ENCODE measurements at regions of chr14 and their contacts with region 1.

Region 1: GRCh38 chr14:69460093-69460701 is 24.3 kb upstream of the PLEKHD1 start:
- DNase-seq: no peak
- H3K4me3 ChIP-seq: no peak overlapping the region
- H3K27ac ChIP-seq: no peak overlapping the region
- H3K4me1 ChIP-seq: no peaks in the 10 kb centered on the region
- H3K27me3 ChIP-seq: no peaks in the 10 kb centered on the region
- CTCF ChIP-seq: peak; percentile 72 to 83 (median 75)
- EP300 ChIP-seq: no peak
- POLR2A ChIP-seq: no peak

Region 2: DNA sequence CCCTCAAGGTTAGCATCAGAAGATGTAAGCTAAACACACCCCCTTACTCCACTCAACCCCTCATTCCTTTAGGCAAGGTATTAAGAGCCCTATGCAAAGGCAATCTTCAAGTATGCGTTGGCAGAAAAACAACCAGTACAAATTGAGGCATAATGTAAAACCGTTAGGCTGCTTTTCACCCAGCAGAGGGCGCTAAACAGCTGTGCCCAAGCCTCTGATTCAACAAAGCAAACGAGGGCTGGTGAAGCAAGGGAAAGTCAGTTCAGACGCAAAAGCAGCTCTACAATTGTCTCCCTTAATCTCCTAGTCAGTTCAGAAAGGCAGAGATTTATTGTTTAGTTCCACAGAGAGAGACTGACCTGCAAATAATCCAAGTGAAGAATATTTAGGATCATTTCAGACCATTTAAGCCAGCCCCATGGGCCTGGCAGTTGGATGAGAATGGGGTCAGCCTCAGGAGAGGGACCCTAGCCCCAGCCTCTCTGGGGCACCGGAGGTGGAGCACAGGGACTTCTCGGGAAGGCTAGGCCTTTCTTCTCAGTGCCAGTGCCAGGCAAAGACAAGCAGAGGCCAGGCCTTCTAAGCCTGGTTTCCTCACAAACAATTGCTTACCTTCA is 330.8 kb before region 1 on chr14:
- intact Hi-C with region 1: loop called (anchors 10 kb)
- DNase-seq: no peak
- H3K4me3 ChIP-seq: no peak overlapping the region
- H3K27ac ChIP-seq: peak overlapping the region; percentile 70 to 73 (median 72)
- H3K4me1 ChIP-seq: peaks cover 39 to 80% (median 63%) of the 10 kb centered on the region in 4 donors
- H3K27me3 ChIP-seq: no peaks in the 10 kb centered on the region
- CTCF ChIP-seq: peak in 2 of 3 experiments; percentile 92
- EP300 ChIP-seq: no peak
- POLR2A ChIP-seq: no peak

Region 3: DNA sequence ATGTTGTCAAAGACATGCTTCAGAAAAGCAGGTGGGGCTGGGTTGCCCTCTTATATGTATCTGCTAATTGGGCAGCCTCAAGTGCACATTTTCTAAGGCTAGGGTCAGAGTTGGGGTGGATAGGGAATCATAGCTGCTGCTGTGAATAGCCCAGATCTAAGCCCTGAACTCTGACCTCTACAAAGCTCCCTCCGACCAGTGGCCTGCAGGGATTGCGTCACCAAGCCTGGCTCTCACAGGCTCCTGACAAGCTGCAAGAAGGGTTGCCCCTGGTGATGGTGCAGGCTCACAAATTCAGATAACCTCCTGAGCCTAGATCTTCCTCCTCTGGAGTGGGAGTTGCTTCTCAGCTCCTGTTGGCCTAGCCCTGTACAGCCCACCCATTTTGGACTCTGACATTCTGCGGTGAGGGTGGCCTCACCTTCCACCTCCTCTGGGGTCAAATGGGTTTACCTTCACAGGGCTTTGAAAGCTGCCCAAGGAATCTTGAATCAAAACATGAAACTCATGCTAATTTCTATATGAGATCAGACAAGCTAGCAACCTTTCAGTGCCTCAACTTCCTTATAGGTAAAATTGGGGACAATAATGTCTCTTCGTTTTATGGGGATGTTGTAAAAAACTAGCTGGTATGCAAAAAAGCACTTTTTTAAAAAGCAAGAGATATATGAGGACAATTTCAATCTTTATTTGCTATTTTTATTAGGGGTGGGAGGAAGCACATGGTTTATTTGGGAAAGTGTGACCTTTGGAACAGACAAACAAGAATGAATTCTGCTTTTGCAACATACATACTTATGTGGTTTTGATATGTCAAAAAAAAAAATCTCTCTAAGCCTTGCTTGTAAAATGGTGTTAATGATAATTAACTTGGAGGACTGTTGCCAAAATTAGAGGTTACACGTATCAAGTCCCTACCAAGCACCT is 146.3 kb after region 1 on chr14:
- intact Hi-C with region 1: no loop called
- DNase-seq: no peak
- H3K4me3 ChIP-seq: no peak overlapping the region
- H3K27ac ChIP-seq: no peak overlapping the region
- H3K4me1 ChIP-seq: peaks cover 10 to 20% (median 13%) of the 10 kb centered on the region in 4 donors
- H3K27me3 ChIP-seq: no peaks in the 10 kb centered on the region
- CTCF ChIP-seq: no peak
- EP300 ChIP-seq: no peak
- POLR2A ChIP-seq: no peak

Measured in esophagus muscularis mucosa (tissue), 4 donors.